ENCODE measurements at regions of chr15 and their contacts with region 1.

Region 1: GRCh38 chr15:43872416-43873020 is 45.7 kb downstream of the WDR76 start:
- DNase-seq: peak in 1 of 5 donors; percentile 31
- ATAC-seq: peak; percentile 43 to 73 (median 68)
- H3K4me3 ChIP-seq: no peak overlapping the region
- H3K27ac ChIP-seq: no peak overlapping the region
- H3K4me1 ChIP-seq: peaks cover 0 to 42% (median 4%) of the 10 kb centered on the region in 12 donors
- H3K27me3 ChIP-seq: no peaks in the 10 kb centered on the region
- CTCF ChIP-seq: peak; percentile 29 to 67 (median 54)
- POLR2A ChIP-seq: no peak

Region 2: GRCh38 chr15:44066316-44066740 is 193.8 kb after region 1 on chr15:
- intact Hi-C with region 1: loop called in 2 of 10 experiments (anchors 10 kb)
- DNase-seq: peak in 4 of 5 donors; percentile 31 to 42 (median 36)
- ATAC-seq: peak in 2 of 4 donors; percentile 50 to 59
- H3K4me3 ChIP-seq: no peak overlapping the region
- H3K27ac ChIP-seq: no peak overlapping the region
- H3K4me1 ChIP-seq: no peaks in the 10 kb centered on the region
- H3K27me3 ChIP-seq: peaks cover 0 to 3% (median 0%) of the 10 kb centered on the region in 9 donors
- CTCF ChIP-seq: peak; percentile 54 to 77 (median 68)
- POLR2A ChIP-seq: no peak

Region 3: DNA sequence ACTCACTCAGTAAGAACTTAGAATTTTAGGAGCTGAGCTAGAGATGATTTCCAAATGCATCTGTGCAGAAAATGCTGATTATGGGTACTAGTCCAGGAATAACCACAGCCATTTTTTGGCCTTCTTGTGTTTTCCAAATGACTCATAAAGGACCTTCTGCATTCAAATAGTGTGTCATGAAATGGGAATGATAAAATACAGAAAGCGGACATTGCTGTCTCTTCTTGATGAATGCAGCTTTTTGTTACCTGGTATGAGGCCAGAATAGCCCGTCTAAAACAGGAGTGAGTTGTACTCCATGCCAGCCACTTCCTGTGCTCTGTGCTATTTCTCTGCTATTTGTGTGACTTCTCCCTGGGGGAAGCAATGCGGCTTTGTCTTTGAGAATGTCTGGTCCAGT is 343.1 kb after region 1 on chr15:
- intact Hi-C with region 1: loop called in 2 of 10 experiments (anchors 5 to 10 kb)
- DNase-seq: no peak
- ATAC-seq: no peak
- H3K4me3 ChIP-seq: no peak overlapping the region
- H3K27ac ChIP-seq: no peak overlapping the region
- H3K4me1 ChIP-seq: no peaks in the 10 kb centered on the region
- H3K27me3 ChIP-seq: peaks cover 0 to 16% (median 0%) of the 10 kb centered on the region in 9 donors
- CTCF ChIP-seq: no peak
- POLR2A ChIP-seq: no peak

Region 4: GRCh38 chr15:44501768-44502366 is 629.3 kb after region 1 on chr15:
- intact Hi-C with region 1: loop called in 1 of 10 experiments (anchors 10 kb)
- DNase-seq: no peak
- ATAC-seq: no peak
- H3K4me3 ChIP-seq: no peak overlapping the region
- H3K27ac ChIP-seq: no peak overlapping the region
- H3K4me1 ChIP-seq: no peaks in the 10 kb centered on the region
- H3K27me3 ChIP-seq: no peaks in the 10 kb centered on the region
- CTCF ChIP-seq: peak in 11 of 12 donors; percentile 33 to 66 (median 57)
- POLR2A ChIP-seq: no peak